ENCODE measurements at regions of chr1 and their contacts with region 1.

Region 1: GRCh38 chr1:114299331-114299975 is 145.8 kb upstream of the SYT6 start:
- DNase-seq: peak; percentile 89
- H3K4me3 ChIP-seq: no peak overlapping the region
- H3K27ac ChIP-seq: peak overlapping the region; percentile 83
- H3K4me1 ChIP-seq: peaks cover 45% of the 10 kb centered on the region
- H3K27me3 ChIP-seq: no peaks in the 10 kb centered on the region
- CTCF ChIP-seq: peak; percentile 65

Region 2: GRCh38 chr1:114145504-114146151 is 153.8 kb before region 1 on chr1:
- CTCF ChIA-PET with region 1: interaction called, 14 read pairs
- POLR2A ChIA-PET with region 1: no interaction called
- intact Hi-C with region 1: no loop called
- DNase-seq: no peak
- H3K4me3 ChIP-seq: no peak overlapping the region
- H3K27ac ChIP-seq: no peak overlapping the region
- H3K4me1 ChIP-seq: peaks cover 21% of the 10 kb centered on the region
- H3K27me3 ChIP-seq: no peaks in the 10 kb centered on the region
- CTCF ChIP-seq: no peak

Region 3: GRCh38 chr1:114235960-114236359 is 63.5 kb before region 1 on chr1:
- CTCF ChIA-PET with region 1: no interaction called
- POLR2A ChIA-PET with region 1: no interaction called
- intact Hi-C with region 1: no loop called
- DNase-seq: no peak
- H3K4me3 ChIP-seq: no peak overlapping the region
- H3K27ac ChIP-seq: no peak overlapping the region
- H3K4me1 ChIP-seq: peaks cover 5% of the 10 kb centered on the region
- H3K27me3 ChIP-seq: no peaks in the 10 kb centered on the region
- CTCF ChIP-seq: no peak

Region 4: DNA sequence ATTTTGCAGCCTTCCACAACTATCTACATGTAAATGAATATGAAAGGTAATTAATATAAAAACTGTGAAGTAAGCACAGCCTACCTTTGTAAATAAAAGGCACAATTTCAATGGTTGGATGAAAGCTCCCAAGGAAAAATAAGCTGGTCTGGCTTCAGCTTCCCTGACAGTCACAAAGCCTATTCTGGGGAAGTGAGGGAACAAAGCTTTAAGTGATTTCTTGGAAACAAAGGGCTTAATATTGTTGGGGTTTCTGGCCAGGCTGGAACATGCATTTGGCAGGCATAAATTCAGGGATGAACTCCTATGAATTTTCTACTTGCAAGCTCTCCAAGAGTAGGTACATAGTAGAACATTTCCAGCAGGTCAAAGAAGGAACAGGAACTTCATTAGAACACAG is 264.7 kb after region 1 on chr1:
- CTCF ChIA-PET with region 1: no interaction called
- POLR2A ChIA-PET with region 1: no interaction called
- intact Hi-C with region 1: no loop called
- DNase-seq: no peak
- H3K4me3 ChIP-seq: no peak overlapping the region
- H3K27ac ChIP-seq: no peak overlapping the region
- H3K4me1 ChIP-seq: no peaks in the 10 kb centered on the region
- H3K27me3 ChIP-seq: no peaks in the 10 kb centered on the region
- CTCF ChIP-seq: no peak